CD8-positive, alpha-beta T cell (primary cell): ENCODE measurements at regions of chr9 and their contacts with region 1.

Region 1: DNA sequence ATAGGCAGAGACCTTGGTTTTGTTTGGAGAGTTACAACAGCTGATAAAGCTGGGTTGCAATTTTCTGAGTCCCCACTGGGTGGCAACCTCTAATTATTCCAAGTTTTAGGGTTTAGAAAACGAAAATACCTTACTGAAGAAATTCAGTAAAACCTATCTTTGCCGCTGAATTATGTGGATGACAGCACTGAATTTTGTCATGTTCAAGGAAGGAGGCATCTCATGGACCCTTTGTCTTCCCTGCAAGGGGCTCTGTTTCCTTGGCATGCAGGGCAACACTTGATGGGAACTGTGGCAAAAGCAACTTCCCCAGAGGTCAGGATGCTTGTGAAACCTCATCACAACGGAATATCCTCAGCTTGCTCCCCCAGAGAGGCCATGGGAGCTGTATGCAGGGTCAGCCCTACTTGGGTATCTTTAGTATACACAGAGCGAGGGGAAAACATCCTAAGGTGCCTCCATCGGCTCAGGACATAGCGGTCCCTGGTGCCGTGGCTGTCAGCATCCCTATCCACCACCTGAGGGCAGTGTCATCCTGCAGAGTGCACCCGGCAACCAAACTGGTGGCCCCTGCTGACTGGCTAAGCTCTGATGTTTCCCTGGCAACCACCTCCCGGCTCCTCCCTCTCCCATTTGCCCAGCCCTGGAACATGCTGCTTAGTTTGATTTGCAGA is 123.1 kb downstream of the RXRA start:
- DNase-seq: peak; percentile 66 to 93 (median 83)
- ATAC-seq: peak; percentile 99
- H3K4me3 ChIP-seq: no peak overlapping the region
- H3K4me3 Mint-ChIP-seq: no peak overlapping the region
- H3K27ac ChIP-seq: no peak overlapping the region
- H3K27ac Mint-ChIP-seq: no peak overlapping the region
- H3K4me1 ChIP-seq: no peaks in the 10 kb centered on the region
- H3K4me1 Mint-ChIP-seq: peaks cover 3% of the 10 kb centered on the region
- H3K27me3 ChIP-seq: no peaks in the 10 kb centered on the region
- H3K27me3 Mint-ChIP-seq: no peaks in the 10 kb centered on the region
- CTCF ChIP-seq: peak; percentile 60

Region 2: DNA sequence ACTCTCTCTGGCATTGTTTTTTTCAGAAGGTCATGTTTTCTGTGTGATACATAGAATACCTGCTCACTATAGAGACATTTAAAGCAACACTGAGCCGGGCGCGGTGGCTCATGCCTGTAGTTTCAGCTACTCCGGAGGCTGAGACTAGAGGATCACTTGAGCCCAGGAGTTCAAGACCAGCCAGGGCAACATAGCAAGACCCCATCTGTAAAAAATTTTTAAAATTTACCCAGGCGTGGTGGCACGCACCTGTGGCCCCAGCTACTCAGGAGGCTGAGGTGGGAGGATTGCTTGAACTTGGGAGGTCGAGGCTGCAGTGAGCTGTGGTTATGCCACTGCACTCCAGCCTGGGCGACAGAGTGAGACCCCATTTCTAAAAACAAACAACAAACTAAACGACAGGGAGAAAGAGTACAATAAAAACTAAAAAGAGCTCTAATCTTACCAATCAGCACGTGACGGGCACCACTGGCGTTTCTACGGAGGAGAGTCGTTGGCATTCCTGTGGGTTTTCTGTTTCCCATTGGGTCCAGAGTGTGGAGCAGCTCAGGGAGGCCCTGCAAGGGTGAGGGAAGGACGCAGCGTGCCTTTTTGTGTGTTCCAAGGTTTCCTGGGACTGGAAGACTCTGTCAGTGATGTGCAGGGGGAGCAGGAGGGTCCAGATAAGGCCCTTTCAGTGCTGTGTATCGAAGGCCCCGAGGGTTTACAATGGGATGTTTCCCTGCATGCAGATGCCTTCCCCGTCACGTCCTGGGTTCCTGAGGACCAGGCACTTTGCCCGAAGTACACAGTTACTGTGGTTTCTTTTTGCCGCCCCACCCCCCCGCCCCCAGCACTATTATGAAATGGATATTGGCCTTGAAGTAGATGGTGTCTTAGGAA is 277.8 kb before region 1 on chr9:
- CTCF ChIA-PET with region 1: interaction called, 24 read pairs
- POLR2A ChIA-PET with region 1: no interaction called
- intact Hi-C with region 1: no loop called
- DNase-seq: peak in 1 of 9 experiments; percentile 16
- ATAC-seq: no peak
- H3K4me3 ChIP-seq: no peak overlapping the region
- H3K4me3 Mint-ChIP-seq: no peak overlapping the region
- H3K27ac ChIP-seq: no peak overlapping the region
- H3K27ac Mint-ChIP-seq: no peak overlapping the region
- H3K4me1 ChIP-seq: no peaks in the 10 kb centered on the region
- H3K4me1 Mint-ChIP-seq: no peaks in the 10 kb centered on the region
- H3K27me3 ChIP-seq: no peaks in the 10 kb centered on the region
- H3K27me3 Mint-ChIP-seq: no peaks in the 10 kb centered on the region
- CTCF ChIP-seq: no peak

Region 3: DNA sequence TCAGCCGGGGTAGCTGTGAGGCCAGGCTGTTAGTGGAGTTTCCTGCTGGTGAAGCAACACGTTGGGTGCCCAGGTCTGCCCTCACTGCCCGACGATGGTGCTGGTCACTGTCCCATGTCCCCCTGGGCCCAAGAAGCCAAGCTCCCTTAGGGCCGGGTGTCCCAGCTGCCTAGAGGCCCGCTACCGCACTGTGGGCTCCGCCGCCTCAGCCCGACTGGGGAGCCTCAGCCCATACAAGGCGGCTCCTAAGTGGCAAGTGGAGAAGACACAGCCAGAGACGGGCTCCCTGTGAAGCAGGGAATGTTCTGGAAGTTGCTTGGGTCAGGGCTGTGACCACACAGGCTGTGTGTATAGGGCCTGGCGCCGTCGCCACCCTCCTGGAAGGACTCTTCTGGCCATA is 26.2 kb before region 1 on chr9:
- CTCF ChIA-PET with region 1: no interaction called
- POLR2A ChIA-PET with region 1: no interaction called
- intact Hi-C with region 1: no loop called
- DNase-seq: no peak
- ATAC-seq: no peak
- H3K4me3 ChIP-seq: no peak overlapping the region
- H3K4me3 Mint-ChIP-seq: no peak overlapping the region
- H3K27ac ChIP-seq: no peak overlapping the region
- H3K27ac Mint-ChIP-seq: no peak overlapping the region
- H3K4me1 ChIP-seq: no peaks in the 10 kb centered on the region
- H3K4me1 Mint-ChIP-seq: no peaks in the 10 kb centered on the region
- H3K27me3 ChIP-seq: no peaks in the 10 kb centered on the region
- H3K27me3 Mint-ChIP-seq: no peaks in the 10 kb centered on the region
- CTCF ChIP-seq: no peak

Region 4: GRCh38 chr9:134475011-134475790 is 25.8 kb after region 1 on chr9:
- CTCF ChIA-PET with region 1: interaction called, 10 read pairs
- POLR2A ChIA-PET with region 1: no interaction called
- intact Hi-C with region 1: no loop called
- DNase-seq: peak in 8 of 9 experiments; percentile 9 to 75 (median 42)
- ATAC-seq: peak; percentile 87
- H3K4me3 ChIP-seq: no peak overlapping the region
- H3K4me3 Mint-ChIP-seq: peak overlapping the region; percentile 29
- H3K27ac ChIP-seq: peak overlapping the region; percentile 54 to 64
- H3K27ac Mint-ChIP-seq: peak overlapping the region; percentile 97
- H3K4me1 ChIP-seq: peaks cover 28% of the 10 kb centered on the region
- H3K4me1 Mint-ChIP-seq: peaks cover 10% of the 10 kb centered on the region
- H3K27me3 ChIP-seq: no peaks in the 10 kb centered on the region
- H3K27me3 Mint-ChIP-seq: no peaks in the 10 kb centered on the region
- CTCF ChIP-seq: no peak

Region 5: GRCh38 chr9:134496413-134497282 is 47.3 kb after region 1 on chr9:
- CTCF ChIA-PET with region 1: no interaction called
- POLR2A ChIA-PET with region 1: no interaction called
- intact Hi-C with region 1: no loop called
- DNase-seq: no peak
- ATAC-seq: no peak
- H3K4me3 ChIP-seq: no peak overlapping the region
- H3K4me3 Mint-ChIP-seq: no peak overlapping the region
- H3K27ac ChIP-seq: no peak overlapping the region
- H3K27ac Mint-ChIP-seq: no peak overlapping the region
- H3K4me1 ChIP-seq: no peaks in the 10 kb centered on the region
- H3K4me1 Mint-ChIP-seq: no peaks in the 10 kb centered on the region
- H3K27me3 ChIP-seq: no peaks in the 10 kb centered on the region
- H3K27me3 Mint-ChIP-seq: peaks cover 2% of the 10 kb centered on the region
- CTCF ChIP-seq: no peak

Region 6: GRCh38 chr9:134597957-134598883 is 148.9 kb after region 1 on chr9:
- CTCF ChIA-PET with region 1: no interaction called
- POLR2A ChIA-PET with region 1: no interaction called
- intact Hi-C with region 1: loop called in 1 of 2 experiments (anchors 1 kb)
- DNase-seq: peak in 1 of 9 experiments; percentile 25
- ATAC-seq: no peak
- H3K4me3 ChIP-seq: no peak overlapping the region
- H3K4me3 Mint-ChIP-seq: no peak overlapping the region
- H3K27ac ChIP-seq: no peak overlapping the region
- H3K27ac Mint-ChIP-seq: no peak overlapping the region
- H3K4me1 ChIP-seq: no peaks in the 10 kb centered on the region
- H3K4me1 Mint-ChIP-seq: no peaks in the 10 kb centered on the region
- H3K27me3 ChIP-seq: peaks cover 0 to 2% of the 10 kb centered on the region in 2 experiments
- H3K27me3 Mint-ChIP-seq: peaks cover 7% of the 10 kb centered on the region
- CTCF ChIP-seq: no peak

Region 7: GRCh38 chr9:134732392-134733110 is 283.2 kb after region 1 on chr9:
- CTCF ChIA-PET with region 1: interaction called, 12 read pairs
- POLR2A ChIA-PET with region 1: no interaction called
- intact Hi-C with region 1: no loop called
- DNase-seq: no peak
- ATAC-seq: no peak
- H3K4me3 ChIP-seq: no peak overlapping the region
- H3K4me3 Mint-ChIP-seq: no peak overlapping the region
- H3K27ac ChIP-seq: no peak overlapping the region
- H3K27ac Mint-ChIP-seq: no peak overlapping the region
- H3K4me1 ChIP-seq: no peaks in the 10 kb centered on the region
- H3K4me1 Mint-ChIP-seq: no peaks in the 10 kb centered on the region
- H3K27me3 ChIP-seq: no peaks in the 10 kb centered on the region
- H3K27me3 Mint-ChIP-seq: peaks cover 2% of the 10 kb centered on the region
- CTCF ChIP-seq: no peak

Region 8: GRCh38 chr9:135343837-135344522 is 894.6 kb after region 1 on chr9:
- CTCF ChIA-PET with region 1: interaction called, 3 read pairs
- POLR2A ChIA-PET with region 1: no interaction called
- intact Hi-C with region 1: loop called in 1 of 2 experiments (anchors 5 kb)
- DNase-seq: peak in 7 of 9 experiments; percentile 11 to 58 (median 42)
- ATAC-seq: no peak
- H3K4me3 ChIP-seq: no peak overlapping the region
- H3K4me3 Mint-ChIP-seq: no peak overlapping the region
- H3K27ac ChIP-seq: no peak overlapping the region
- H3K27ac Mint-ChIP-seq: no peak overlapping the region
- H3K4me1 ChIP-seq: no peaks in the 10 kb centered on the region
- H3K4me1 Mint-ChIP-seq: no peaks in the 10 kb centered on the region
- H3K27me3 ChIP-seq: no peaks in the 10 kb centered on the region
- H3K27me3 Mint-ChIP-seq: peaks cover 13% of the 10 kb centered on the region
- CTCF ChIP-seq: peak; percentile 55

Region 9: DNA sequence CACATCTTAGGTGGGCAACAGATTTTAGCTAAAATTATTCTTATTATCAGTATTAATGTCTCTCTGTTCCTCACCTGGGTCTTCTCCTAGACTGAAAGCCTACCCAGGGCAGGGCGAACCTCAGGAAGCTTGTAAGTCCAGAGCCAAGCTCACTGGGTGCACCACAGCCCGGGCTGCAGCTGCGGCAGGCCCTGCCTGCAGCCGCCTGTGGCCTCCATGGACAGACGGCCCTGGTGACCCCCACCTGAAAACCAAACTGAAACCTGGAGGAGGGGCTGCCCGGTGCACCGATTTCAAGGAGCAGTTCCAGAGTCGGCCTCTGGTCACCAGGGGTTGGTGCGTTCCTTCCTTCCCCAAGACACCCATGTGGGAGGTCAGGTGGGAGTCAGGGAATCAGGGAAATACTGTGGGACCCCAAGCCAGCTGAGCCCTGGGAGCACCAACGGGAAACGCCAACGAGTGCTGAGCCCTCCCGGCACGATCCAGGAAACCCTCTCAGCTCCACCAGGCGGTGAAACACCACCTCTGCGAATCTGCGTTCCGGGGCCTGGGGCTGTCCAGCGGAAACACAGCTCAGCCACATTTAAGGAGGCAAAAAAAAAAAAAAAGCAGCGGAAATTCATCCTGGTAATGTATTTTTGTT is 961.6 kb after region 1 on chr9:
- CTCF ChIA-PET with region 1: interaction called, 5 read pairs
- POLR2A ChIA-PET with region 1: no interaction called
- intact Hi-C with region 1: loop called in 1 of 2 experiments (anchors 1 kb)
- DNase-seq: no peak
- ATAC-seq: no peak
- H3K4me3 ChIP-seq: no peak overlapping the region
- H3K4me3 Mint-ChIP-seq: no peak overlapping the region
- H3K27ac ChIP-seq: no peak overlapping the region
- H3K27ac Mint-ChIP-seq: no peak overlapping the region
- H3K4me1 ChIP-seq: no peaks in the 10 kb centered on the region
- H3K4me1 Mint-ChIP-seq: no peaks in the 10 kb centered on the region
- H3K27me3 ChIP-seq: no peaks in the 10 kb centered on the region
- H3K27me3 Mint-ChIP-seq: no peaks in the 10 kb centered on the region
- CTCF ChIP-seq: no peak